ENCODE measurements at regions of chr2 and their contacts with region 1.

Region 1: GRCh38 chr2:60794277-60794863 is 38.3 kb downstream of the PAPOLG start:
- DNase-seq: no peak
- ATAC-seq: no peak

Region 2: DNA sequence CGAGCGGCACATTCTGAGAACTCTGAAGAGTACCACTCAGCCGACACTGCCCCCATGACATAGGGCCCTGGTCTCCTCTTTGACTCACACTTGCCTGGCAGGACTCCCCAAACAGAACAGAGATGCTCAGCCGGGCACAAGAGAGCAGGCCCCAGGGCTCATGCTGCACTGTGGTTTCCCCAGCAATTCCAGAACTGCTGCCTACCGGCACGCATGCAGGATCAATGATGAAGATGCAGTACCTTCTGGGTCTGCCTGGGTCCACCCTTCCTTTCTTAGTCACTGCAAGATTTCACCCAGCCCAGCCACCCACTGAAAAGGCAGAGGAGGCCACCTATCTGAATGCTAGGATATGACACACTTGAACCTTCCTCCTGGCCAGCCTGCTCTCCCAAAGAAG is 290.3 kb before region 1 on chr2:
- intact Hi-C with region 1: no loop called
- DNase-seq: no peak
- ATAC-seq: peak in 1 of 2 donors; percentile 22

Region 3: DNA sequence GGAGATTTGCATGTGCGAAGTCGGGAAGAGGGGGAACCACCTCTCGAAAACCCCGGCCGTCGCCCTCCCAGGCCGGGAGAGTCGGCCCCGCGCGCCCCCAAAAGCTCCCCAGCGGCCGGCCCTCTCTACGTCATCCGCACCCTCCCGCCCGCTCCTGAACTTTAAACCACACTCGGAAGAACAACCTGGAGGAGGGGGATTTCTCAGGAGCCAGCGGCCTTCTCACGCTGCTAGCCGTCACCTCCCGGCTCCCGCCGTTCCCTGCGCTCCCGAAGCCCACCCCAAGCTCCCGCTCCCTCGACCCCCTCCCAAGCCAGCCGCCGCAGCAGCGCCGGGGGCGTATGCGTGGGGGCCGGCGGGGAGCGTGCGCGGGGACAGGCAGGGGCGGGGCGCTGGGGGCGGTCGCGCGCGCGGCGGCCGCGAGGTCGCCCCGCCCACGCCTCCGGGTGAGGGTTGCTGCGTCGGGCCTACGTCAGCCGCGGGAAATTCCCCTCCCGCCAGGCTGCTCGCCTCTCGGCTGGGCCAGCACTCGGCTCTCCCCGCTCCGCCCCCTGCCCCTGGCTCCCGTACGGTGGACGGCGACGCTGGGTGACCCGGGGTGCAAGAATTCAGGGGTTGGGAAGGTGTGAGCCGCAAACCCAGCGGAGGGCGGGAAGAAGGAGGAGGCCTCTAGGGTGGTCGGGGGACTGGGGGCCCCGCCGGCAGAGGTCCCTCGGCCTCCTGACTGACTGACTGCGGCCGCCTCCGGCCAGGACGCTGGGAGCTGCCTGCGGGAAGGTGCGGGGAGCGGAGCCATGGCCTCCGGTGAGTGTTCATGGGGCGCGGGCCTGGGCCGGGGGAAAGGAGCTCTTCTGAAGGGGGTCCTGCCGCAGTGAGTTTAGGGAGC is 86.9 kb after region 1 on chr2 and contains the start of gene REL:
- intact Hi-C with region 1: loop called in 1 of 2 experiments (anchors 5 kb)
- DNase-seq: peak; percentile 94
- ATAC-seq: peak; percentile 96 to 99
- total RNA-seq, gene REL: 7.3 to 8.2 TPM

Region 4: GRCh38 chr2:60998628-60999545 is 204.5 kb after region 1 on chr2:
- intact Hi-C with region 1: loop called (anchors 5 to 10 kb)
- DNase-seq: no peak
- ATAC-seq: peak in 1 of 2 donors; percentile 38

Region 5: GRCh38 chr2:61006486-61007105 is 212.2 kb after region 1 on chr2:
- intact Hi-C with region 1: loop called in 1 of 2 experiments (anchors 10 kb)
- DNase-seq: no peak
- ATAC-seq: no peak

Measured in left cardiac atrium (tissue), 4 donors.